Heart left ventricle (tissue), 16 donors: ENCODE measurements at regions of chr21 and their contacts with region 1.

Region 1: GRCh38 chr21:42561762-42562650 is 48.4 kb downstream of the SLC37A1 start:
- DNase-seq: peak in 1 of 5 donors; percentile 33
- ATAC-seq: no peak
- H3K4me3 ChIP-seq: no peak overlapping the region
- H3K27ac ChIP-seq: no peak overlapping the region
- H3K4me1 ChIP-seq: no peaks in the 10 kb centered on the region
- H3K27me3 ChIP-seq: no peaks in the 10 kb centered on the region
- CTCF ChIP-seq: no peak
- POLR2A ChIP-seq: no peak

Region 2: DNA sequence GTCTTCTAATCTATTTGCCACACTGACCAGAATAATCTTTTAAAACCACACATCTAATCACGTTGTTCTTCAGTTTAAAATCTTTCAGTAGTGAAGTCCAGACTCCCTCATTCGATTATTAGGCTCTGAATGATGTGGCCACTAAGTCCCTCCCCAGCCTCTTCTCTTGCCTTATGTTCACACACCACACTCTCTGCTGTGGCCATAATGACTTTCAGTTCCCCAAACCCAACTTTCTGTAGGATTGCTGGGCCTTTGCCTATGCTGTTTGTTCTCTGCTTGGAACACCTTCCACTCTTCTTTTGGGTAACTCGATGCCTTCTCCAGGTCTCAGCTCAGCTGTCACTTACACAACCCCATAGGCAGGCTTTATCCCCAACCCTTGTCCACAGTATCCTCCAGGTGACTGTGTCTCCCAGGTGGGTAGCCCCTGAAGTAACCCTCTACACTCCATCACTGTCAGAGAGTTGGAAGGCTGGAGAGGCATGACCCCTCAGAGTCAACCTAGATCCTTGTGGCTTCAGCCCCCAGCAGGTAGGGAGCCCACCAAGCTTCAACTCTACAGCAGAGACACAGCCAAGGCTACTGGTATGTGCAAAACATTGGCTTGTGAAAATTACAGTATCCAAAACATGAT is 56.8 kb before region 1 on chr21:
- intact Hi-C with region 1: loop called in 1 of 10 experiments (anchors 10 kb)
- DNase-seq: no peak
- ATAC-seq: no peak
- H3K4me3 ChIP-seq: no peak overlapping the region
- H3K27ac ChIP-seq: no peak overlapping the region
- H3K4me1 ChIP-seq: no peaks in the 10 kb centered on the region
- H3K27me3 ChIP-seq: no peaks in the 10 kb centered on the region
- CTCF ChIP-seq: no peak
- POLR2A ChIP-seq: no peak